Right ventricle myocardium inferior (tissue), 1 donor: ENCODE measurements at regions of chr3 and their contacts with region 1.

Region 1: GRCh38 chr3:185937689-185938463 is at the start of gene TRA2B:
- DNase-seq: peak; percentile 99
- ATAC-seq: peak; percentile 98
- total RNA-seq, gene TRA2B: 44.2 TPM

Region 2: DNA sequence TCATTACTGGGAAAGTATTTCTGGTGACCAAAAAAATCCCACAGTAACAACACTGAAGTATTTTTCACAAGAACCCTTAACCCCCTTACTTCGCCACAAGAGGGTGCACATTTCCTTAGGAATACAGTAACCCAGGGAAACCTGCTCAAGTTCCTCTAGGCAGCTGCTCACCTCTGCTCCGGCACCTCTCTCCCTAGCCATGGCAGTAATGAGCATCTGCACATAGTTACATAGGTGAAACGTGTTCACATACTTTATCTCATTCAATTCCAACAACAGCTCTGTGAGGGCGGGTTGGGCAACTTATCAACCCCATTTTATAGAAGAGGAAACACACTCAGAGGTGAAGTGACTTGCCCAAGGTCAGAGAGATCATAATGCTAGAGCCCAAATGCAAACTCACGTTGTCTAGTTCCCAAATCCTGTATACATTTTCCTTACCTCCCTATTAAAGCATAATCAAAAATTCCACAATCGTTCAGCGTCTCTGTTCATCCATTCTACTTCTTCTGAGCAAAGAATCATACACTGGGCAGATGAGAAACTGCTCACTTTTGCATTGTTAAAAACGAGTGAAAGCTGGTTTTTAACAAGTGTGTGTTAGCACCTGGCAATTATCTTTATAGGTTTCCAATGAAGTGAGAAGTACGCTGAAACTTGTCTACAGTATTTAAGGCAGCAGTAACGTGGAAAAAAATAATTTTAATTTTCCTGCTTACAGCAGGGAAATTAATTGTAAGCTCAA is 203.7 kb before region 1 on chr3:
- intact Hi-C with region 1: loop called (anchors 10 kb)
- DNase-seq: no peak
- ATAC-seq: peak; percentile 68

Region 3: GRCh38 chr3:185824476-185825378 is 113.1 kb before region 1 on chr3 and contains the start of gene IGF2BP2:
- intact Hi-C with region 1: loop called (anchors 5 kb)
- DNase-seq: peak; percentile 91
- ATAC-seq: peak; percentile 88
- total RNA-seq, gene IGF2BP2: 15.9 TPM

Region 4: GRCh38 chr3:186108941-186109865 is 171.3 kb after region 1 on chr3 and contains the start of gene ETV5:
- intact Hi-C with region 1: loop called (anchors 5 kb)
- DNase-seq: peak; percentile 99
- ATAC-seq: peak; percentile 98
- total RNA-seq, gene ETV5: 4.7 TPM

Region 5: DNA sequence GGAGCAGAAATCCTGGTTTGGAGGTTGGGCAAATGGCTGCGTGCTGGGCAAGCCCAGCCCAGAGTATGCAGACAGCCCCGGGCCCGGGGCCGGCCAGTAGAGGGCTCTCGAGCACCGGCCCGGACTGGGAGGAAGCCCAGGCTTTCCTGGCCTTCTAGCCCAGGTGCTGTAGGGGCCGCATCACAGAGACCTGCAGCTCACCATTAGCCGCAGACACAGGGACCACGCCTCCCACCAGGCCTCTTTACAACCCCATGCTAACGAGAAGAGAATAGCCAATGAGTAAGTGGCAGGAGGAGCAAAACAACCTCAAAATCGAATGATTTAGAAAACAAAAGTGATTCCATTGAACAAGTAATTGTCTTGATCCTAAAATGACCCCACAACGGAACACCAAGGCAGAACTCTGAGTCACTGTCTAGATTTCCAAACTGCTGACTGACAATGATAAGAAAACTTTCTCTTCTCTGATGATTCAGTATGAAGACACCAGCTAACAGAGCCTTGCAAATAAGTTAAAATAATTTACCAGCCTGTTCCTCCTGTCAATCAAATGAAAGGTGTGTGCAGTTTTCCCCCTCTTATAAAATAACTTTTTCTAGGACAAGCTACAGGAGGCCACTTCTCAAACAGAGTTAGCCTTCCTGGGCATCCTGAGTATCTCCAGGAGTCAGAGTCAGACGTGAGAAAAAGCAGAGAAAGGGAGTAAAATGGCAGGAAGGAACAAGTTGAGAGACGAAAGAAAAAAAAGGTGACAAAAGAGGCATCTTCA is 321.9 kb after region 1 on chr3:
- intact Hi-C with region 1: no loop called
- DNase-seq: peak; percentile 80
- ATAC-seq: peak; percentile 90

Region 6: GRCh38 chr3:186783073-186783730 is 845.3 kb after region 1 on chr3 and contains the start of gene EIF4A2:
- intact Hi-C with region 1: loop called (anchors 5 kb)
- DNase-seq: peak; percentile 94
- ATAC-seq: peak; percentile 87
- total RNA-seq, gene EIF4A2: 422 TPM